GM12878 (cell line): ENCODE measurements at regions of chr3 and their contacts with region 1.

Region 1: GRCh38 chr3:124730129-124730940 is at the start of gene UMPS:
- DNase-seq: peak; percentile 51
- ATAC-seq: peak; percentile 97
- H3K4me3 ChIP-seq: peak within 1 kb of the TSS; percentile 93
- H3K27ac ChIP-seq: peak within 1 kb of the TSS; percentile 87
- H3K4me1 ChIP-seq: no peaks in the 10 kb centered on the region
- H3K27me3 ChIP-seq: no peaks in the 10 kb centered on the region
- CTCF ChIP-seq: no peak
- EP300 ChIP-seq: 0 out of 4 replicates have a peak, but pooled peaks of 1 of the 2 experiments have one; percentile 13
- POLR2A ChIP-seq: peak; percentile 99
- RAD21 ChIP-seq: no peak
- polyA plus RNA-seq, gene UMPS: 52.1 to 69.2 TPM

Region 2: GRCh38 chr3:124741027-124741426 is 10.7 kb after region 1 on chr3:
- CTCF ChIA-PET with region 1: interaction called, 3 read pairs
- POLR2A ChIA-PET with region 1: interaction called, 13 read pairs
- RAD21 ChIA-PET with region 1: no interaction called
- SMC1A ChIA-PET with region 1: interaction called, 3 read pairs
- in situ Hi-C with region 1: no loop called
- intact Hi-C with region 1: no loop called
- DNase-seq: no peak
- ATAC-seq: no peak
- H3K4me3 ChIP-seq: no peak overlapping the region
- H3K27ac ChIP-seq: no peak overlapping the region
- H3K4me1 ChIP-seq: no peaks in the 10 kb centered on the region
- H3K27me3 ChIP-seq: no peaks in the 10 kb centered on the region
- CTCF ChIP-seq: no peak
- EP300 ChIP-seq: no peak
- POLR2A ChIP-seq: no peak
- RAD21 ChIP-seq: no peak

Region 3: GRCh38 chr3:124905849-124906248 is 175.5 kb after region 1 on chr3:
- CTCF ChIA-PET with region 1: interaction called, 14 read pairs
- POLR2A ChIA-PET with region 1: no interaction called
- RAD21 ChIA-PET with region 1: no interaction called
- SMC1A ChIA-PET with region 1: interaction called, 3 read pairs
- in situ Hi-C with region 1: no loop called
- intact Hi-C with region 1: no loop called
- DNase-seq: no peak
- ATAC-seq: no peak
- H3K4me3 ChIP-seq: no peak overlapping the region
- H3K27ac ChIP-seq: no peak overlapping the region
- H3K4me1 ChIP-seq: no peaks in the 10 kb centered on the region
- H3K27me3 ChIP-seq: no peaks in the 10 kb centered on the region; a peak in 2 of 4 replicates
- CTCF ChIP-seq: no peak
- EP300 ChIP-seq: no peak
- POLR2A ChIP-seq: no peak
- RAD21 ChIP-seq: no peak